ENCODE measurements at regions of chr4 and their contacts with region 1.

Region 1: GRCh38 chr4:162497564-162498167 is 333.9 kb upstream of the FSTL5 start:
- DNase-seq: peak; percentile 66
- H3K4me3 Mint-ChIP-seq: no peak overlapping the region
- H3K27ac Mint-ChIP-seq: no peak overlapping the region
- H3K4me1 Mint-ChIP-seq: peaks cover 6% of the 10 kb centered on the region
- H3K27me3 Mint-ChIP-seq: no peaks in the 10 kb centered on the region
- CTCF ChIP-seq: peak; percentile 90

Region 2: GRCh38 chr4:162715401-162715800 is 217.7 kb after region 1 on chr4:
- CTCF ChIA-PET with region 1: no interaction called
- POLR2A ChIA-PET with region 1: no interaction called
- intact Hi-C with region 1: no loop called
- DNase-seq: no peak
- H3K4me3 Mint-ChIP-seq: no peak overlapping the region
- H3K27ac Mint-ChIP-seq: no peak overlapping the region
- H3K4me1 Mint-ChIP-seq: no peaks in the 10 kb centered on the region
- H3K27me3 Mint-ChIP-seq: no peaks in the 10 kb centered on the region
- CTCF ChIP-seq: no peak

Region 3: GRCh38 chr4:162959046-162959445 is 461.4 kb after region 1 on chr4:
- CTCF ChIA-PET with region 1: no interaction called
- POLR2A ChIA-PET with region 1: no interaction called
- intact Hi-C with region 1: loop called (anchors 1 kb)
- DNase-seq: peak; percentile 27
- H3K4me3 Mint-ChIP-seq: no peak overlapping the region
- H3K27ac Mint-ChIP-seq: no peak overlapping the region
- H3K4me1 Mint-ChIP-seq: no peaks in the 10 kb centered on the region
- H3K27me3 Mint-ChIP-seq: no peaks in the 10 kb centered on the region
- CTCF ChIP-seq: peak; percentile 21

Region 4: GRCh38 chr4:163042306-163042705 is 544.6 kb after region 1 on chr4:
- CTCF ChIA-PET with region 1: interaction called, 26 read pairs
- POLR2A ChIA-PET with region 1: no interaction called
- intact Hi-C with region 1: loop called (anchors 1 kb)
- DNase-seq: no peak
- H3K4me3 Mint-ChIP-seq: no peak overlapping the region
- H3K27ac Mint-ChIP-seq: no peak overlapping the region
- H3K4me1 Mint-ChIP-seq: no peaks in the 10 kb centered on the region
- H3K27me3 Mint-ChIP-seq: no peaks in the 10 kb centered on the region
- CTCF ChIP-seq: no peak

Region 5: GRCh38 chr4:163166041-163166579 is 668.4 kb after region 1 on chr4:
- CTCF ChIA-PET with region 1: no interaction called
- POLR2A ChIA-PET with region 1: no interaction called
- intact Hi-C with region 1: loop called (anchors 10 kb)
- DNase-seq: peak; percentile 63
- H3K4me3 Mint-ChIP-seq: peak overlapping the region; percentile 77
- H3K27ac Mint-ChIP-seq: peak overlapping the region; percentile 99
- H3K4me1 Mint-ChIP-seq: peaks cover 26% of the 10 kb centered on the region
- H3K27me3 Mint-ChIP-seq: no peaks in the 10 kb centered on the region
- CTCF ChIP-seq: no peak

Region 6: DNA sequence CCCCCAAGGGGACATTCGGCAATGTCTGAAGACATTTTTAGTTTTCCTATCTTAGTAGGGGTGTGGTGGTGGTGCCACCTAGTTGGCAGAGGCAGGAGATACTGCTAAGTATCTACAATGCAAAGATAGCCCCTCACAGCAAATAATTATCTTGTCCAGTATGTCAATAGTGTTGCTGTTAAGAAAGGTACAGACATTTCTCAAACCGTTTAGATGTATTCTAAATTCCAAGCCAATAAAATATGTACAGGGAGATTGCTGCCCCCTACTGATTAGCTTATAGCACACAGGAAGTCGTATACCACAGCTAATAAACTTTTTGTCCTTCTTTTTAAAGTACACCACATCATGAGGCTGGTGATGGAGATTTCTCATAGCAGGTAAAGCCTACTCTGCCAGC is 1257.3 kb after region 1 on chr4:
- CTCF ChIA-PET with region 1: no interaction called
- POLR2A ChIA-PET with region 1: no interaction called
- intact Hi-C with region 1: loop called (anchors 5 kb)
- DNase-seq: peak; percentile 49
- H3K4me3 Mint-ChIP-seq: no peak overlapping the region
- H3K27ac Mint-ChIP-seq: no peak overlapping the region
- H3K4me1 Mint-ChIP-seq: no peaks in the 10 kb centered on the region
- H3K27me3 Mint-ChIP-seq: no peaks in the 10 kb centered on the region
- CTCF ChIP-seq: peak; percentile 38

Region 7: GRCh38 chr4:164012396-164013027 is 1514.8 kb after region 1 on chr4:
- CTCF ChIA-PET with region 1: no interaction called
- POLR2A ChIA-PET with region 1: no interaction called
- intact Hi-C with region 1: loop called (anchors 2 kb)
- DNase-seq: peak; percentile 66
- H3K4me3 Mint-ChIP-seq: no peak overlapping the region
- H3K27ac Mint-ChIP-seq: no peak overlapping the region
- H3K4me1 Mint-ChIP-seq: no peaks in the 10 kb centered on the region
- H3K27me3 Mint-ChIP-seq: no peaks in the 10 kb centered on the region
- CTCF ChIP-seq: peak; percentile 55

Measured in MCF 10A (cell line).